ENCODE measurements at regions of chr3 and their contacts with region 1.

Region 1: DNA sequence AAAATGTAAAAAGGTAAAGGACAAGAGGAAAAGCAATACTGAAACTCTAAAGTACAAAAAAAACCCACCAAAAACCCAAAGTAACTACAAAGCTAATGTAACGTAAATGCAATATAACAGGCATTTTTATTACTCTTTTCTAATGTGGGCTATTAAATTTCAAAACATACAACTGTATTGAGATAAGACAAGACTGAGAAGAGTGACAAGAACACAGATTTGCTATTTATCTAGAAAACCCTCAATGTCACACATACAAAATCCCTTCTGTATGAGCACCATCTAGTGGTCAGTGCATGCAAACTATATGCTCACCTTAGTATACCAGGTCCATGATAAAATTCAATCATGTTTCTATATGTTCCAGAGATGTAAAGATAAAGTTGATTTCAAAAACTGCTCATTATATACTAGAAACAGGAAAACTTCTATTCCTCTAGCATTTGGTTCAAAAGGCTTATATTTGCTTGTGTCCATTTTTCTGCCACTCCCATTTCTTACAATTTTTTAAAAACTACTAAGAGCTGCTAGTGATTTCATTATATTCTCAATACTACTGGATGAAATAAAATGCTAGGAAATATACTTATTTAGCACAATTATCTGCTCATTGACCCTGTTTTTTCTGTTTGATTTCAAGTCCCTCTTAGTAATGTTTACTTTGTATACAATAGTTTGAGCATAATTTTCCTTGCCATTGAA is 111.4 kb downstream of the DLG1 start:
- DNase-seq: no peak
- H3K4me3 Mint-ChIP-seq: no peak overlapping the region
- H3K27ac Mint-ChIP-seq: no peak overlapping the region
- H3K4me1 Mint-ChIP-seq: peaks cover 16% of the 10 kb centered on the region
- H3K27me3 Mint-ChIP-seq: no peaks in the 10 kb centered on the region

Region 2: DNA sequence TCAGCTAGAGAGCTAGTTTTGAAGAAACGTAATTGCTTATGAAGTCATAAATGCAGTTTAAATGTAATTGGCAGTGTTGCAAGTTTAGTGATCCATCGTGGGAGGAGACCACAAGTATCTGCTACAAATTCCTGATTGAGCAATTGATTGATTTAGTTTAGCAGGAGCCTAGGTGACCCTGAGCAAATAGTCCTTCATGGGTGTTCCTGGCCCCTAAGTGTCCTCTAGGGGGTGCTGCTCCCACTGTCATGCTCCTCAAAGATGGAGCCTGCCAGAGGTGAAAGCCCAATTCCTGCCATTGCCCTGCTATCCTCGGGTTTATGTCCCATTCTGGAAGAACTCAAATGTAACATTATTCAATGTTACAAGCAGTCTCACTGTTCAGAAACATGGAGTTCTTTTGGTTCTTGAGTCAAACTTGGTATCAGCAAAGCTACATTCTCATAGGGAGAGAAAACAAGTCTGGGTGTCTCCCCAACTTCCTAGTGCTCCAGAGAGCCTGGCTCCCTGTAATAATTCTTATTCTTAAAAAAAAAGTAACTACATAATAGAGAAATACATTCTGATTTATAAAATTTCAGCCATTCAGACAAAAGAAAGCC is 349.1 kb before region 1 on chr3:
- intact Hi-C with region 1: loop called (anchors 5 kb)
- DNase-seq: peak; percentile 61
- H3K4me3 Mint-ChIP-seq: no peak overlapping the region
- H3K27ac Mint-ChIP-seq: no peak overlapping the region
- H3K4me1 Mint-ChIP-seq: peaks cover 3% of the 10 kb centered on the region
- H3K27me3 Mint-ChIP-seq: no peaks in the 10 kb centered on the region

Region 3: DNA sequence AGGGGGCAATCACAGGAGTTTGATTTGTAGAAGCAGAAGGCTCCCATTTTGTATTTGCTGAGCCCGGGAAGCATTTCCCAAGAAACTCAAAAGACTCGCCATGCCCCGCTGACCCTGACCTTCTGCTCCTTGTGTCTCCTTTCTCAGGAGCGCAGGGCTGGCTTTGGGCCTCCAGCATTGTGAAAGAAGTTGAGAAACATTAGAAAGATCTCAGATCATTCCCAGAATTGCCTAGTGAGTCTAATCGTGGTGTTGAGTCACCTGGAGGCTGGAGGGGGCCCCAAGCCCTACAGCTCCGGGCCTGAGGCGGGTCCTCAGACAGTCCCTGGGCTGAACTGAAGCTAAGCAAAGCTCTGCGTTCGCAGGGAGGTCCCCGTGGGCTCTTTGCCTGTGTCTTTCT is 207.5 kb before region 1 on chr3:
- intact Hi-C with region 1: loop called (anchors 2 kb)
- DNase-seq: no peak
- H3K4me3 Mint-ChIP-seq: no peak overlapping the region
- H3K27ac Mint-ChIP-seq: no peak overlapping the region
- H3K4me1 Mint-ChIP-seq: peaks cover 5% of the 10 kb centered on the region
- H3K27me3 Mint-ChIP-seq: peaks cover 10% of the 10 kb centered on the region

Region 4: GRCh38 chr3:197002701-197003454 is 184.2 kb before region 1 on chr3:
- intact Hi-C with region 1: loop called (anchors 2 kb)
- DNase-seq: peak; percentile 74
- H3K4me3 Mint-ChIP-seq: no peak overlapping the region
- H3K27ac Mint-ChIP-seq: no peak overlapping the region
- H3K4me1 Mint-ChIP-seq: peaks cover 7% of the 10 kb centered on the region
- H3K27me3 Mint-ChIP-seq: no peaks in the 10 kb centered on the region

Measured in activated T-helper 2 cell treated with anti-CD3 and anti-CD28 coated beads, Interferon-gamma antibody, Interleukin-2, Interleukin-4, amounts not matched to agents 10 μg/mL and 5 μg/mL and 100 μg/mL, durations not matched to agents 14 hours and 24 hours and 36 hours (primary cell).